Gastrocnemius medialis (tissue), 4 donors: ENCODE measurements at regions of chr7 and their contacts with region 1.

Region 1: GRCh38 chr7:27210441-27211083 is 10.7 kb upstream of the HOXA13 start:
- DNase-seq: peak in 1 of 2 donors; percentile 33
- ATAC-seq: peak; percentile 36 to 76
- H3K4me3 ChIP-seq: peak overlapping the region; percentile 30 to 57 (median 37)
- H3K27ac ChIP-seq: no peak overlapping the region
- H3K4me1 ChIP-seq: peaks cover 4 to 5% of the 10 kb centered on the region in 2 donors
- H3K27me3 ChIP-seq: peaks cover 13 to 43% (median 40%) of the 10 kb centered on the region in 3 donors
- CTCF ChIP-seq: peak; percentile 39 to 85 (median 66)
- POLR2A ChIP-seq: no peak

Region 2: DNA sequence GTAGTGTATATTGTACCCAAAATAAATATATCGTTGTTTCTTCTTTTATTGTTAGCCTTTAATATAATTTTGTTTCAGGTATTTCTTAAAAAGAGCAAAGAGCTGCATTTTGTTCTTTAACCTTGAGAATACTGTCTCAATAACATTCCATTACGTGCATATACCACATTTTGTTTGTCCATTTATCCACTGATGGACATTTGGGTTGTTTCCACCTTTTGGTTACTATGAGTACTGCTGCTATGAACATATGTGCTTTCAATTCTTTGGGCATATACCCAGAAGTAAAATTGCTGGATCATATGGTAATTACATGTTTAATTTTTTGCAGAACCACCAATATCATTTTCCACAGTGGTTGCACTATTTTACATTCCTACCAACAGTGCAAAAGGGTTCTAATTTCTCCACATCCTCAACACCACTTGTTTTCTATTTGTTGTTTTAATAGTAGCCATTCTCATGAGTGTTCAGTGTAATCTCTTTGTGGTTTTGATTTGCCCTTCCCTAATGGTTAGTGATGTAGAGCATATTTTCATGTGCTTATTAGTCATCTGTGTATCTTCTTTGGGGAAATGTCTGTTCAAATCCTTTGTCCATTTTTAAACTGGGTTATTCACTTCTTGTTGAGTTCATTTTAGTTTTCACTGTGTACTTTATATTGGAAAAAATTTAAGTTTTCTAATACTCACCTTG is 350.1 kb after region 1 on chr7:
- in situ Hi-C with region 1: loop called in 1 of 4 experiments (anchors 25 kb)
- intact Hi-C with region 1: no loop called
- DNase-seq: no peak
- ATAC-seq: no peak
- H3K4me3 ChIP-seq: no peak overlapping the region
- H3K27ac ChIP-seq: no peak overlapping the region
- H3K4me1 ChIP-seq: no peaks in the 10 kb centered on the region
- H3K27me3 ChIP-seq: no peaks in the 10 kb centered on the region
- CTCF ChIP-seq: no peak
- POLR2A ChIP-seq: no peak

Region 3: DNA sequence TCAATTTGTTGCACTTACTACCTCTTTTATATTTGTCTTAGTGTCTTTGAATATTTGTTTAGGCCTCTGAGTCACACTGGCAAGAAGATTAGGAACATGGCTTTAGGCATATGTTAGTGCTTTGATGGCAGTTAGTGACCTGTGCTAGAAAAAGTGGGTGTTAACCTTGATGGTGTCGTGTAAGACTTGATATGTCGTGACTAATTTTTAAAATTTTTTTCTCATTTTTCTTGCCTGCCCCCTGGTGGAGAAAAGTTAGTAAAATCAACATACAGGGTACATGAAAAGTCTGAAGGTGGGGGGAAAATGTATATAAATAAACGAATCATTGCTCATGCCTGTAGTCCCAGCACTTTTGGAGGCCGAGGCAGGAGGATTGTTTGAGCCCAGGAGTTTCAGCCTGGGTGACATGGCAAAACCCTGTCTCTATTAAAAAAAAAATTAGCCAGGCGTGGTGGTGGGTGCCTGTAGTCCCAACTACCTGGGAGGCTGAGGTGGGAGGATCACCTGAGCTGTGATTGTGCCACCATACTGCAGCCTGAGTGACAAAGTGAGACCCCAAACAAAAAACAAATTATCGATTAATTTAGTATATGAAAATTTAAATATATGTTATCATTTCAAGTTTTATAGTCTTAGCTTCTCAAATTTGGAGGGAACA is 574.0 kb after region 1 on chr7:
- in situ Hi-C with region 1: loop called in 2 of 4 experiments (anchors 25 kb)
- intact Hi-C with region 1: no loop called
- DNase-seq: no peak
- ATAC-seq: peak in 1 of 2 donors; percentile 18
- H3K4me3 ChIP-seq: no peak overlapping the region
- H3K27ac ChIP-seq: no peak overlapping the region
- H3K4me1 ChIP-seq: peaks cover 0 to 12% of the 10 kb centered on the region in 2 donors
- H3K27me3 ChIP-seq: no peaks in the 10 kb centered on the region
- CTCF ChIP-seq: peak; percentile 27 to 50 (median 36)
- POLR2A ChIP-seq: no peak

Region 4: GRCh38 chr7:27921081-27921836 is 710.7 kb after region 1 on chr7:
- in situ Hi-C with region 1: loop called in 3 of 4 experiments (anchors 10 to 25 kb)
- intact Hi-C with region 1: no loop called
- DNase-seq: no peak
- ATAC-seq: peak; percentile 65 to 83
- H3K4me3 ChIP-seq: peak overlapping the region in 1 of 4 donors; percentile 31
- H3K27ac ChIP-seq: no peak overlapping the region
- H3K4me1 ChIP-seq: peaks cover 4 to 10% of the 10 kb centered on the region in 2 donors
- H3K27me3 ChIP-seq: no peaks in the 10 kb centered on the region
- CTCF ChIP-seq: peak in 4 of 5 experiments; percentile 16 to 48 (median 36)
- POLR2A ChIP-seq: no peak